ENCODE measurements at regions of chr17 and their contacts with region 1.

Region 1: DNA sequence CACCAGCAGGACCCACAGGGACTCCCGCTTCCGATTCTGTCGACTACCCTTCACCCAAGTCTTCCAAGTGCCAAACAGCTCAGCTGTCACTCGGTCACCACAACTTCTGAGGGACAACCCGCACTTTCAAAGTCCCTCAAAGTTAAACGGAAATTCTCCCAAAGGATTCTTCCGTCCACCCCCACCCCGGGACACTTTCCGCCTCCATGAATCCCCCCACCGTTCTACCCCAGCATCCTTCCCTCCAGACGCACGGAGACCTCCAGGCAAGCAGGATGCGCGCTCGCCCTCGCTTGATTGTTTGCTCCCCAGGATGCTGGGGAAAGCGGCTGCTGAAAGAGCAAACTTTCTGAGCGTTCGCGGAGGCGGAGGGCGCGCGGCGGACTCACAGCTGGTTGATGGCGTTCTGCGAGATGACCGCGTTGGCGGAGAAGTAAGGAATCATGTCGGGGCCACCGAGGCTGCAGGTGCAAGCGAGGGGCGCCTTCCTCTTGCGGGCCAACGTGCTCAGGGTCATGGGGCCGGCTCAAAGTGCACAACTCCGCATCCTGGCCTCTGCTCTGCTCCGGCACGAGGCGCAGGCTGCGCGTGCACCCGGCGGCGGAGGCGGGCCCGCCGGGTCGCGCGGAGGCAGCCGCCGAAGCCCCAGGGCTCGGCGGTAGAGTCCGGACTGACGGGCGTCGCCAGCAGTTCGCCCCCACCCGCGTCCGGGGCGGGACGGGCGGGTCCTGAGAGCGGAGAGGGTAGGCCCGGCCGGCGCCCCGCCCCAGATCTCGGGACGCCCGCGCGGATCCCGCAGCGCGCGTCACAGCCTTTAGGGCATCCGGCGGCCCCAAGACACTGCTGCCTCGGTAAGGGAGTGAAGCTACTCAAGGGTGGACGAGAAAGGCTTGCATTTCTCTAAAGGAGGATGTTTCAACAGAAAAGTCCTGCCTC is 138.3 kb upstream of the CORO6 start:
- DNase-seq: peak; percentile 55
- H3K4me3 ChIP-seq: peak overlapping the region; percentile 63
- H3K27ac ChIP-seq: peak overlapping the region; percentile 51 to 73
- H3K4me1 ChIP-seq: no peaks in the 10 kb centered on the region
- H3K27me3 ChIP-seq: no peaks in the 10 kb centered on the region
- CTCF ChIP-seq: no peak
- POLR2A ChIP-seq: peak; percentile 24

Region 2: GRCh38 chr17:29549177-29549923 is 211.7 kb before region 1 on chr17:
- intact Hi-C with region 1: no loop called
- DNase-seq: no peak
- H3K4me3 ChIP-seq: no peak overlapping the region
- H3K27ac ChIP-seq: no peak overlapping the region
- H3K4me1 ChIP-seq: no peaks in the 10 kb centered on the region
- H3K27me3 ChIP-seq: no peaks in the 10 kb centered on the region
- CTCF ChIP-seq: no peak
- POLR2A ChIP-seq: no peak

Region 3: GRCh38 chr17:29625037-29625750 is 135.8 kb before region 1 on chr17:
- intact Hi-C with region 1: loop called (anchors 5 kb)
- DNase-seq: no peak
- H3K4me3 ChIP-seq: no peak overlapping the region
- H3K27ac ChIP-seq: no peak overlapping the region
- H3K4me1 ChIP-seq: peaks cover 5% of the 10 kb centered on the region
- H3K27me3 ChIP-seq: no peaks in the 10 kb centered on the region
- CTCF ChIP-seq: no peak
- POLR2A ChIP-seq: no peak